ENCODE measurements at regions of chr12 and their contacts with region 1.

Region 1: GRCh38 chr12:111984820-111985219 is 28.1 kb downstream of the TMEM116 start:
- DNase-seq: no peak
- H3K4me3 Mint-ChIP-seq: no peak overlapping the region
- H3K27ac Mint-ChIP-seq: no peak overlapping the region
- H3K4me1 Mint-ChIP-seq: peaks cover 7% of the 10 kb centered on the region
- H3K27me3 Mint-ChIP-seq: no peaks in the 10 kb centered on the region
- CTCF ChIP-seq: no peak

Region 2: GRCh38 chr12:111838353-111838752 is 146.5 kb before region 1 on chr12:
- CTCF ChIA-PET with region 1: no interaction called
- POLR2A ChIA-PET with region 1: no interaction called
- intact Hi-C with region 1: no loop called
- DNase-seq: no peak
- H3K4me3 Mint-ChIP-seq: no peak overlapping the region
- H3K27ac Mint-ChIP-seq: no peak overlapping the region
- H3K4me1 Mint-ChIP-seq: peaks cover 18% of the 10 kb centered on the region
- H3K27me3 Mint-ChIP-seq: peaks cover 10% of the 10 kb centered on the region
- CTCF ChIP-seq: no peak

Region 3: GRCh38 chr12:111927346-111927745 is 57.5 kb before region 1 on chr12:
- CTCF ChIA-PET with region 1: interaction called, 3 read pairs
- POLR2A ChIA-PET with region 1: no interaction called
- intact Hi-C with region 1: loop called (anchors 2 kb)
- DNase-seq: no peak
- H3K4me3 Mint-ChIP-seq: no peak overlapping the region
- H3K27ac Mint-ChIP-seq: no peak overlapping the region
- H3K4me1 Mint-ChIP-seq: no peaks in the 10 kb centered on the region
- H3K27me3 Mint-ChIP-seq: no peaks in the 10 kb centered on the region
- CTCF ChIP-seq: no peak